ENCODE measurements at regions of chr22 and their contacts with region 1.

Region 1: GRCh38 chr22:24175160-24175808 is 6.0 kb upstream of the SUSD2 start:
- DNase-seq: peak; percentile 91
- ATAC-seq: peak; percentile 85
- H3K4me3 Mint-ChIP-seq: no peak overlapping the region
- H3K27ac Mint-ChIP-seq: no peak overlapping the region
- H3K4me1 Mint-ChIP-seq: no peaks in the 10 kb centered on the region
- H3K27me3 Mint-ChIP-seq: no peaks in the 10 kb centered on the region
- CTCF ChIP-seq: peak; percentile 90

Region 2: GRCh38 chr22:24106385-24107381 is 68.6 kb before region 1 on chr22:
- CTCF ChIA-PET with region 1: interaction called, 54 read pairs
- POLR2A ChIA-PET with region 1: no interaction called
- DNase-seq: peak; percentile 28
- ATAC-seq: peak; percentile 57; the same call in 1 of the 2 replicates
- H3K4me3 Mint-ChIP-seq: no peak overlapping the region
- H3K27ac Mint-ChIP-seq: peak overlapping the region; percentile 23; the same call in 1 of the 2 replicates
- H3K4me1 Mint-ChIP-seq: no peaks in the 10 kb centered on the region
- H3K27me3 Mint-ChIP-seq: no peaks in the 10 kb centered on the region
- CTCF ChIP-seq: no peak

Region 3: GRCh38 chr22:24133187-24133965 is 41.9 kb before region 1 on chr22:
- CTCF ChIA-PET with region 1: interaction called, 81 read pairs
- POLR2A ChIA-PET with region 1: no interaction called
- DNase-seq: peak; percentile 42
- ATAC-seq: peak; percentile 74
- H3K4me3 Mint-ChIP-seq: no peak overlapping the region
- H3K27ac Mint-ChIP-seq: peak overlapping the region; percentile 80; the same call in 1 of the 2 replicates
- H3K4me1 Mint-ChIP-seq: peaks cover 4% of the 10 kb centered on the region; the same call in 1 of the 2 replicates
- H3K27me3 Mint-ChIP-seq: no peaks in the 10 kb centered on the region
- CTCF ChIP-seq: no peak

Region 4: GRCh38 chr22:24146194-24146616 is 29.1 kb before region 1 on chr22:
- CTCF ChIA-PET with region 1: interaction called, 16 read pairs
- POLR2A ChIA-PET with region 1: no interaction called
- DNase-seq: peak; percentile 66
- ATAC-seq: peak; percentile 94
- H3K4me3 Mint-ChIP-seq: no peak overlapping the region
- H3K27ac Mint-ChIP-seq: peak overlapping the region; percentile 92
- H3K4me1 Mint-ChIP-seq: peaks cover 27% of the 10 kb centered on the region
- H3K27me3 Mint-ChIP-seq: no peaks in the 10 kb centered on the region
- CTCF ChIP-seq: no peak

Region 5: GRCh38 chr22:24189249-24190158 is 14.2 kb after region 1 on chr22:
- CTCF ChIA-PET with region 1: interaction called, 34 read pairs
- POLR2A ChIA-PET with region 1: no interaction called
- DNase-seq: peak; percentile 86
- ATAC-seq: peak; percentile 97
- H3K4me3 Mint-ChIP-seq: no peak overlapping the region
- H3K27ac Mint-ChIP-seq: no peak overlapping the region
- H3K4me1 Mint-ChIP-seq: peaks cover 3% of the 10 kb centered on the region; the same call in 1 of the 2 replicates
- H3K27me3 Mint-ChIP-seq: no peaks in the 10 kb centered on the region; the same call in 1 of the 2 replicates
- CTCF ChIP-seq: peak; percentile 65; the same call in 1 of the 2 replicates

Region 6: DNA sequence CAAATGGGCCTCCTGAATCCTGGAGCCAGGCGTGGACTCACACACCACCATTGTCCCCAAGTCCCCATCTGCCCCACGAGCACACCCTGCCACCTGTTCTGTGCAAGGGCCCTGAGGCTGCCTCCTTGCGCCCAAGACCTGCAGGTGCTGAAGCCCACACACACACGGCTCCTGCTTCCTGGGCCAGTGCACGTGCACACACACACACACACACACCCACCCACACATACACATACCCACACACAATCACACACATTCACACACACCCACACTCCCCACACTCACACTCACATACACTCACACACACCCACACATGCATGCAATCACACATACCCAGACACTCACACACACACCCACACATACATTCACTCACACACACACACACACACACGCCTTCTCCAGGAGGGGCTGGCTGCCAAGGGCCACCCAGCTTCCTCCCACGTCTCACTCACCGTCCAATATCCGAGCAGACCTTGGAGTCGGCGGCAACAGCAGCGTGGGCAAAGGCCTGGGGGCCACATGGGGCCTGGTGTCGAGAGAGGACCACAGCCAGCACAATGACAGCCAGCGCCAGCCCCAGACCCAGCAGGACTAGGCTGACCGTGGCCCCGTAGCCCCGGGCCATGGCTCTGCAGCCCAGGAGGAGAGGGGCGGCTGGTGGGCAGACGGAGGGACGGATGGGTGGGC is 69.0 kb after region 1 on chr22:
- CTCF ChIA-PET with region 1: interaction called, 18 read pairs
- POLR2A ChIA-PET with region 1: no interaction called
- DNase-seq: no peak
- ATAC-seq: no peak
- H3K4me3 Mint-ChIP-seq: no peak overlapping the region
- H3K27ac Mint-ChIP-seq: no peak overlapping the region
- H3K4me1 Mint-ChIP-seq: peaks cover 18% of the 10 kb centered on the region
- H3K27me3 Mint-ChIP-seq: no peaks in the 10 kb centered on the region
- CTCF ChIP-seq: no peak

Measured in WTC11 (cell line).